ENCODE measurements at regions of chr14 and their contacts with region 1.

Region 1: GRCh38 chr14:57871459-57872080 is 5.7 kb upstream of the SLC35F4 start:
- DNase-seq: peak; percentile 2
- H3K4me3 ChIP-seq: no peak overlapping the region
- H3K27ac ChIP-seq: no peak overlapping the region
- H3K27me3 ChIP-seq: peaks cover 1% of the 10 kb centered on the region
- CTCF ChIP-seq: peak; percentile 71

Region 2: DNA sequence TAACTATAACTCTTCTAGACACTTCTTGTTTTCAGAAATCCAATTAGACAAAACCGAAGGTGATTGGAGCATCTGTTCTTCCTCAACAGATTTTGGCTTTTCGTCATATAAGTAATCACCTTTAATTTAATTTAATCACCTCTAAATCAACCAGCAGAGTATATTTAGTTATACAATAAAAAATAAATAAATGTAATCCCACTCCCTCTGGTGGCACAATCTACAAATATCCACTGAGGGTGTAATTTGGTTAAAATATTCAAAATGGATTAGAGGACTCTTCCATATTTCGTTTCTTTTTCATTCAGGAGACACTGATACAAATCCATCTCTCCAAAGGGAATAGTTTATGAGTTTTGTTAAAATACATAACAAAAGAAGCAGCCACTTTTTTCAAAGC is 12.6 kb after region 1 on chr14:
- CTCF ChIA-PET with region 1: interaction called, 15 read pairs
- POLR2A ChIA-PET with region 1: no interaction called
- DNase-seq: no peak
- H3K4me3 ChIP-seq: no peak overlapping the region
- H3K27ac ChIP-seq: no peak overlapping the region
- H3K27me3 ChIP-seq: no peaks in the 10 kb centered on the region
- CTCF ChIP-seq: peak; percentile 22; the same call in 1 of the 2 replicates